ENCODE measurements at regions of chr5 and their contacts with region 1.

Region 1: DNA sequence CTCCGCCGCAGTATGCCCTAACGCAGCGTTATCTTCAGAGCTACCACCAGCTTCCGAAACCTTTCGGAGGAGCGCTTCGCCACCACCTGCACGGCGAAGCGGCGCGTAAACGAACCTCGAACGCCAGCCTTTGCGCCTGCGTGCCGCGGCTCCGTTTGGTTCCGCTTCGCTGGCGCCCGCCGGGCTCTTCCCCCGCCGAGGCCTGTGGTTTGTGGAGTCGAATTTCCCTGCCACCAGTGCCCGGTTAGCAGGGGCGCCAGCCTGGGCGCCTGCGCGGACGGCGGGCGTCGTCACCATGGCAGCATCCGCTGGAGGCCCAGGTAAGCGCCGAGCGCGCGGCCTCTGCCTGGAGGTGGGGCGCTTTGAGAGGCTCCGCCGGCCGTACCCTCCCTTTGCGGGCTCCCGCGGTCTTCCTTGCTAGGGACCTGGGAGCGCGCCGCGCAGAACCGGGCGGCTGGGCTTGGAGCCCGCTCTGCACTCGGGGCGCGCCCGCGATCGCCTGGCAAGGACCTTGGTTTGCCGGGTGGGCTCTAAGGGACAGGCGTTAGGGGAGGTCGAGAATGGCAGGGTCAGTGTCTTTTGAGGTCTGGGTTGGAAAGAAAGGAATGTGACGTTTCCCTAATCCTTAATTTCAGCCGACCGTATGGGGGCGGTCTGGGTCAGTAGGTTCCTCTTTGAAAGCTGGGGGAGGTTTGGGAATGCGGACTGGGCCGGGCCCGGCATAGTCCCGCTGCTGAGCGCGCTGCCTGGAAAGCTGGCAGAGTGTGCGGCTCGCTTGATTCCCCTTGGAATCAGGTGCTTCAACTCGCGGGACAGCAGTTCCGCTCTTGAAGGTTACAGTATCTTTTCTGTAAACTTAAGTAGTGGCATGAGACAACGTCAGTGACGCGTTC is at the start of gene FAM151B:
- DNase-seq: peak; percentile 93
- H3K4me3 ChIP-seq: peak within 1 kb of the TSS; percentile 55 to 76 (median 76)
- H3K27ac ChIP-seq: peak within 1 kb of the TSS; percentile 15
- H3K4me1 ChIP-seq: no peaks in the 10 kb centered on the region
- H3K27me3 ChIP-seq: no peaks in the 10 kb centered on the region
- CTCF ChIP-seq: peak in 1 of 2 donors; percentile 11
- POLR2A ChIP-seq: peak; percentile 7
- total RNA-seq, gene FAM151B: 2.0 and 2.6 TPM in 2 replicates

Region 2: GRCh38 chr5:80318212-80318611 is 169.9 kb before region 1 on chr5:
- CTCF ChIA-PET with region 1: no interaction called
- POLR2A ChIA-PET with region 1: no interaction called
- dilution Hi-C with region 1: no loop called
- intact Hi-C with region 1: no loop called
- DNase-seq: no peak
- H3K4me3 ChIP-seq: no peak overlapping the region
- H3K27ac ChIP-seq: no peak overlapping the region
- H3K4me1 ChIP-seq: no peaks in the 10 kb centered on the region
- H3K27me3 ChIP-seq: peaks cover 0 to 2% of the 10 kb centered on the region in 2 experiments
- CTCF ChIP-seq: no peak
- POLR2A ChIP-seq: no peak

Region 3: DNA sequence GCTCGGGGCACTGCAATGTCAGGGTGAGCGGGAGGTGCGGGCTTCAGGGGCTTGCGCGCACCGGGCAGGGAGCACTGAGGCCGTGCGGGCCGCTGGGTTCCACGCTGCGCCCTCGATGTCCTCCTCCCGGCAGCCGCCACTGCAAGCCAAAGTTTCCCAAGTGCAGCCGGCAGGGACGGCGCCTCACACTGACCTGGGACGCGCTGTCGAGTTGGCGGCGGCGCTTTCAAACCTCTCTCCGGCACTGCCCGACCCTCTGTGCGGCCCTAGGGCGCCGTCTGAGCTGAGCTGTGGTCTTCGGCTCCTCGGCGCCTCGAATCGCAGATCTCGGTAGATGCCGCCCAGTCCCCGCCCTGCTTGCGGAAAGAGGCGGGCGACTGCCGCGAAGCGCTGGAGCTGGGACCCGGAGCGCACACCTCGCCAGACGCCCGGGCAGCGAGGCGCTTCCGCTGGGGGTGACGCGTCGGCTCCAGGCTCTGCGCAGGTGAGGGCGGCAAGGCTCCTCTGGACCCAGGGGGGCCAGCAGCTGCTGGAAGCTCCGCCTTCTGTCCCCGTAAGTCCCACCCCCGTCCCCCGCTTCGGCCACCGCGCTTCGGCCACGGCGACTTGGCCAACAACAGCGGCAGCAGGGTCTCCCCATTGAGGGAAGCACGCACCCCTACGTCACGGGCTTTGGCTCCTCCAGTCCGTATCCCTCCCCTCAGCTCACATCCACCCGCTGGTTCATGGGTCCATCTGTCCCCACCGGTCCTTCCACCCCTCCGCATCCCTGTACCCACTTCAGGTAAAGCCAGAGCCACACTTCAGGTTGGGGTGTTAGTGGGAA is 82.1 kb after region 1 on chr5 and contains the start of gene ANKRD34B:
- CTCF ChIA-PET with region 1: no interaction called
- POLR2A ChIA-PET with region 1: no interaction called
- dilution Hi-C with region 1: no loop called
- intact Hi-C with region 1: loop called (anchors 5 kb)
- DNase-seq: peak; percentile 10
- H3K4me3 ChIP-seq: peak within 1 kb of the TSS in 1 of 3 experiments; percentile 26
- H3K27ac ChIP-seq: no peak within 1 kb of the TSS
- H3K4me1 ChIP-seq: no peaks in the 10 kb centered on the region
- H3K27me3 ChIP-seq: peaks cover 28 to 48% of the 10 kb centered on the region in 2 experiments
- CTCF ChIP-seq: no peak
- POLR2A ChIP-seq: no peak
- total RNA-seq, gene ANKRD34B: not detected in 2 replicates

Region 4: GRCh38 chr5:80654391-80655230 is 166.5 kb after region 1 on chr5 and contains the starts of genes DHFR and MSH3:
- CTCF ChIA-PET with region 1: no interaction called
- POLR2A ChIA-PET with region 1: no interaction called
- dilution Hi-C with region 1: no loop called
- intact Hi-C with region 1: loop called (anchors 1 kb)
- DNase-seq: peak; percentile 88
- H3K4me3 ChIP-seq: peak within 1 kb of the TSS; percentile 76 to 93 (median 81)
- H3K27ac ChIP-seq: peak within 1 kb of the TSS; percentile 79
- H3K4me1 ChIP-seq: peaks cover 20% of the 10 kb centered on the region
- H3K27me3 ChIP-seq: no peaks in the 10 kb centered on the region
- CTCF ChIP-seq: peak; percentile 5 to 18
- POLR2A ChIP-seq: peak; percentile 80
- total RNA-seq, gene DHFR: 32.8 and 35.8 TPM in 2 replicates
- total RNA-seq, gene MSH3: 10.5 and 13.0 TPM in 2 replicates

Measured in endothelial cell of umbilical vein (primary cell).